ENCODE measurements at regions of chr2 and their contacts with region 1.

Region 1: GRCh38 chr2:241363316-241363879 is 7.3 kb downstream of the FARP2 start:
- DNase-seq: peak; percentile 32
- H3K4me3 Mint-ChIP-seq: peak overlapping the region; percentile 64
- H3K27ac Mint-ChIP-seq: peak overlapping the region; percentile 10
- H3K4me1 Mint-ChIP-seq: peaks cover 76% of the 10 kb centered on the region
- H3K27me3 Mint-ChIP-seq: no peaks in the 10 kb centered on the region
- CTCF ChIP-seq: no peak

Region 2: DNA sequence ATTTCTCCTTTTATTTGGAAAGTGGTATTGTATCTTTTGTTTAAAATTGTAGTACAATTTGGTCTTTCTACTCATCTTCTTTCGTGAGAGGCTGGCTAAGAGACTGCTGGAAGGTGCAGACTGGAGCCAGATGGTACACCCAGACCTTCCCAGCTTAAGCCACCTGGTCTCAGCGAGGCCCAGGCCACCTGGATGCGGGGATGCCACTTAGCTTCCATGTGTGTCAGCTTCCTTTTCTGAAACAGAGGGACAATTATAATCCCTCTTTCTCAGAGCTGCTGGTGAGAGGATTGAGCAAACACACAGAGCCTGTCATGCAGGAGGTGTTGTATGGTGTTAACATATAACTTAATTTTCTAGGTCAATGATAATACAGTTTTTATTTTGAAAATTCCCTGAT is 10.0 kb after region 1 on chr2:
- CTCF ChIA-PET with region 1: interaction called, 11 read pairs
- intact Hi-C with region 1: loop called (anchors 2 kb)
- DNase-seq: peak; percentile 5
- H3K4me3 Mint-ChIP-seq: no peak overlapping the region
- H3K27ac Mint-ChIP-seq: peak overlapping the region; percentile 91
- H3K4me1 Mint-ChIP-seq: peaks cover 70% of the 10 kb centered on the region
- H3K27me3 Mint-ChIP-seq: no peaks in the 10 kb centered on the region
- CTCF ChIP-seq: no peak

Region 3: GRCh38 chr2:241399941-241400919 is 36.8 kb after region 1 on chr2:
- CTCF ChIA-PET with region 1: no interaction called
- intact Hi-C with region 1: no loop called
- DNase-seq: no peak
- H3K4me3 Mint-ChIP-seq: no peak overlapping the region
- H3K27ac Mint-ChIP-seq: no peak overlapping the region
- H3K4me1 Mint-ChIP-seq: peaks cover 14% of the 10 kb centered on the region
- H3K27me3 Mint-ChIP-seq: no peaks in the 10 kb centered on the region
- CTCF ChIP-seq: no peak

Region 4: DNA sequence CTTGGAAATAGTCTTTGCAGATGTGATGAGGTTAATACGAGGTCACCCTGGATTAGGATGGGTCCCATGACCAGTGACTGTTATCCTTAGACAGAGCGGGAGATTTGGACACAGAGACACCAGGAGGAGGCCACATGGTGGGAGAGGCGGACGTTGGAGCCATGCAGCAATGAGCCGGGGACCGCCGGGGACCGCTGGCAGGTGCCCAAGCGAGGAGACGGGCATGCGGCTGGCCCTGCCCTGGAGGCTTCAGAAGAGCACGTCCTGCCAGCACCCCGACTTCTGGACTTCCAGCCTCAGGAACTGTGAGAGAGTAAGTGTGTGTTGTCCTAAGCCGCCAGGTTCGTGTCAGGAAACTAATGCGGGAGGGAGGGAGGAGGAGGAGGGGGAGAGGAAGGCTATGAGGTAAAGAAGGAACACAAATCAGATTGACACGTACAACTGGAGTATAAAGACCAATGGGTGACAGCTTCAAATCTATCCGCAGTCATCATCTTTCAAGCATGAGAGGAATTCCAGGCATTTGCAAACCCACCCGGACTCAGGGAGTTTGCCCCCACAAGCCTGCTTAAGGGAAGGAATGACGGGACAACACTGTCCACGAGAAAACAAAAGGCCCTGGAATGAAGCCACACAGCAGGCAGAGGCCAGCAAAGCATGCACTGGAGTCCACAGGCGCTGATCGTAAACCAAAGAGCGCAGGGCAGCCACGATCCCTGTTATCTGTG is 183.5 kb after region 1 on chr2:
- CTCF ChIA-PET with region 1: no interaction called
- intact Hi-C with region 1: no loop called
- DNase-seq: no peak
- H3K4me3 Mint-ChIP-seq: no peak overlapping the region
- H3K27ac Mint-ChIP-seq: no peak overlapping the region
- H3K4me1 Mint-ChIP-seq: peaks cover 1% of the 10 kb centered on the region
- H3K27me3 Mint-ChIP-seq: peaks cover 8% of the 10 kb centered on the region
- CTCF ChIP-seq: no peak

Measured in Calu3 (cell line).